GM12878 (cell line): ENCODE measurements at regions of chr11 and their contacts with region 1.

Region 1: DNA sequence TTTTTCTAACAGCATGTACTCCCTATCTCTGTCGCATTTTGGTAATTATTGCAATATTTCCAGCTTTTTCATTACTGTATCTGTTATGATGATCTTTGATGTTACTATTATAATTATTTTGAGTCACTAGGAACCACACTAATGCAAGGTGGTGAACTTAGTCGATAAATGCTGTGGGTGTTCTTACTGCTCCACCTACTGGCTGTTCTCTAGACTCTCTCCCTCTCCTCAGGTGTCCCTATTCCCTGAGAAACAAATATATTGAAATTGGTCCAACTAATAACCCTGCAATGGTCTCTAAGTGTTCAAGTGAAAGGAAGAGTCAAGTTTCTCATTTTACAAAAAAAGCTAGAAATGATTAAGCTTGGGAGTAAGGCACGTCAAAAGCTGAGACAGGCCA is 10.5 kb downstream of the ARL14EP start:
- DNase-seq: no peak
- ATAC-seq: peak; percentile 82
- H3K4me3 ChIP-seq: no peak overlapping the region
- H3K27ac ChIP-seq: no peak overlapping the region
- H3K4me1 ChIP-seq: no peaks in the 10 kb centered on the region
- H3K27me3 ChIP-seq: no peaks in the 10 kb centered on the region
- CTCF ChIP-seq: peak; percentile 48 to 55 (median 49); a peak in 5 of 6 replicates
- EP300 ChIP-seq: no peak
- POLR2A ChIP-seq: no peak
- RAD21 ChIP-seq: peak; percentile 56

Region 2: DNA sequence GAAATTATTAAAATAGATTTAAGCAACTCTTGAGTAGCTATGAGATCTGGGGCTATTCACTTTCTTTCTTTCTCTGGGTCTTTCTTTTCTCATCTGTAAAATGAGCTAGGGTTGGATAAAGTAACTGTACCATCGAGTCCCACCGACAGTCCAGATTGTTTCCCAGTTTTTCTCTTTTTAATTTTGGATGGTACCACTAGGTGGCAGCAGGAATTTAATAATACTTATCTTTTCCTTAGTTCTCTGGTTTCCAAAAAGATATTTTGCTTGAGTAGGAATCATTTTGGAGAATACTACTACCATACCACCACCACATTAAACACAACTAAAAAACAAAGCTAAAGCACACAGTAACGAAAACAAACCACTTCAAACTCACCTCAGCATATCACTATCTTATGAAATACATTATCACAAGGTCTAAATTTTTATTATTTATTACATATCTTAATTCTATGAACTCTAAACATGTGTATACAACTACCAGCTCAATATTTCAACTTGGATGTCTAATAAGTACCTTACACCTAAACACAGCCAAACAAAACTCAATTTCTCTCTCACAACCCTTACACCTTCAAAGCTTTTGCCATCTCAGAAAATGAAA is 900.6 kb before region 1 on chr11:
- CTCF ChIA-PET with region 1: interaction called, 3 read pairs
- POLR2A ChIA-PET with region 1: no interaction called
- RAD21 ChIA-PET with region 1: no interaction called
- SMC1A ChIA-PET with region 1: no interaction called
- in situ Hi-C with region 1: no loop called
- intact Hi-C with region 1: loop called (anchors 5 kb)
- DNase-seq: no peak
- ATAC-seq: peak; percentile 40; the same call in 1 of the 3 replicates
- H3K4me3 ChIP-seq: no peak overlapping the region
- H3K27ac ChIP-seq: no peak overlapping the region
- H3K4me1 ChIP-seq: no peaks in the 10 kb centered on the region
- H3K27me3 ChIP-seq: no peaks in the 10 kb centered on the region
- CTCF ChIP-seq: peak; percentile 33 to 47 (median 37); a peak in 5 of 6 replicates
- EP300 ChIP-seq: no peak
- POLR2A ChIP-seq: no peak
- RAD21 ChIP-seq: peak; percentile 45

Region 3: DNA sequence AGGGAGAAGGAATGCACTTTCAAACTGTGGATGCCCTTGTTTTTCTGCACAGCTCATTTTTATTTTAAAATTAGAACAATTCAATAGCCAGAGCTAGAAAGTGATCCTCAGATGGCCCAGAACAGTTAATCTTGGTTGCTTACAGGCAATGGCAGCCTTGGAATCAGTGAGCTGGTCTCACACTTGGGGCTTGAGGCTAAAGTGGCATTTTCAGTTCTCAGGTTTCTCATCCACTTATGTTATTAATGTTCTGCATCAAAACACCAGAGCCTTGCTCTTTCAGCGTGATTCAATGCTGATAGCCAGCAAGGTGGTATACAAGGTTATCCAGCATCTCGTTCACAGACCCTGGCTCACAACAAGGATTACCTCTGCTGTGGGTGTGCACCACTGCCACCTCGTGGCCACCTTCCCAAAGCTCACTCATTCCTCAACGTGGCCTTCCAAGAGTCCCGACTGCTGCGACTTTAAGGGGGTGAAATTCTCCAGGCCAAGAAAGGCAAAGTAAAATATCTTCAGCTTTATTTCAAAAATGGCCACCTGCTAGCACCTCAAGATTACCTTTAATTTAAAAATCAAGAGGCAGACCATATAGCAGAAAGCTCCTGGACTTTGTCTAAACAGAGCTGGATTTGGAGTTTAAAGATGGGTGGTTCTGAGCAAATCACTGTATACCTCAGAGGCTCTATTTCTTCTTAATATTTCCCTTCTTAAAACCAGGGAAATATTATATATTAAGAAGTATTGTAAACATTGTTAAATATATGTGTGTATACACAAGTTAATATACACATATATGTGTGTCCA is 136.8 kb before region 1 on chr11:
- CTCF ChIA-PET with region 1: interaction called, 15 read pairs
- POLR2A ChIA-PET with region 1: no interaction called
- RAD21 ChIA-PET with region 1: interaction called, 8 read pairs
- SMC1A ChIA-PET with region 1: interaction called, 4 read pairs
- in situ Hi-C with region 1: no loop called
- intact Hi-C with region 1: loop called (anchors 5 kb)
- DNase-seq: no peak
- ATAC-seq: peak; percentile 98
- H3K4me3 ChIP-seq: no peak overlapping the region
- H3K27ac ChIP-seq: no peak overlapping the region
- H3K4me1 ChIP-seq: no peaks in the 10 kb centered on the region
- H3K27me3 ChIP-seq: no peaks in the 10 kb centered on the region; a peak in 1 of 4 replicates
- CTCF ChIP-seq: peak; percentile 76 to 88 (median 85)
- EP300 ChIP-seq: no peak
- POLR2A ChIP-seq: no peak
- RAD21 ChIP-seq: peak; percentile 73

Region 4: DNA sequence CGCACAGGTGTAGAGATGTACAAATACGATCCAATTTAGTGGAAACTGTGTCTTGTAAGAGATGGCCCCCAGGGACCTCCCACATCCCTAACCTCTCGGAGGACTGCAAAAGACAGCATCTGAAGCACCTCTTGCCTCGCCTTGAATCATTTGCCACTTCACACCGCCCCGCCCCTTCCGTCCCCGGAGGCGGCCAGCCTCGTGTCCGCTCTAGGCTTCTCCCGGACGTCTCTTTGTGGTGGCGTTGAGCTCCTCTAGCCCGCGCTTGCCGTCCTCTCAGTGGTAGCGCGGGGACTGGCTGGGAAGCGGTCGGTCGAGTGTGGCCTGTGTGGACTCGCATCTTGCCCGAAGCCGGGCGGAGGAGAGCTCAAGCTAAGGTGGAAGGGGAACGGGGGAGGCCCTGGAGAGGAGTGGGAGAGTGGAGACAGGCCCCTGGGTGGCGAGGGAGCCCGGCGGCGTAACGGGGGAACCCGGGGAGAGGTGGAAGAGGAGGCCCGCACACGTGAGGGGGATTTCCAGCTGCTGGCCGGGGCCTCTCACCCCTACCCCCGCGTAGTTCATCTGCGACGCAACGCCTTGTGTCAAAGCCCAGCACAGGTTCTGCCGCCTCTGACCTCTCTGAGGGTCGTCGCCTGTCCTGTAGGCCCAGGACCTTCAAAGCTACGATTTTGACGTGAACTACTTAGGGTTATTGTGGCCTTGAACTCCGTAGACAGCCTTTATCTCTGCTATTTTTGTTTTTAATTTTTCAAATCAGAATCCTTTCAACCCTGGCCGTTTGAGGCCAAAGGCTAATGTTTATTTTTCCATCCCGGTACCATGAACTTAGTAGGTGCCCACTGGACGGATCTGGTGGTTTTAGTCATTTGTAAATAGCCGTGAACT is 10.3 kb before region 1 on chr11 and contains the start of gene ARL14EP:
- CTCF ChIA-PET with region 1: interaction called, 71 read pairs
- POLR2A ChIA-PET with region 1: interaction called, 42 read pairs
- RAD21 ChIA-PET with region 1: interaction called, 14 read pairs
- SMC1A ChIA-PET with region 1: interaction called, 71 read pairs
- in situ Hi-C with region 1: no loop called
- intact Hi-C with region 1: no loop called
- DNase-seq: peak; percentile 82
- ATAC-seq: peak; percentile 91
- H3K4me3 ChIP-seq: peak within 1 kb of the TSS; percentile 100
- H3K27ac ChIP-seq: peak within 1 kb of the TSS; percentile 92
- H3K4me1 ChIP-seq: peaks cover 2% of the 10 kb centered on the region; the same call in 1 of the 2 replicates
- H3K27me3 ChIP-seq: no peaks in the 10 kb centered on the region
- CTCF ChIP-seq: no peak
- EP300 ChIP-seq: peak in 1 of 2 experiments; percentile 20; a peak in 1 of 4 replicates
- POLR2A ChIP-seq: peak; percentile 99
- RAD21 ChIP-seq: 0 out of 2 replicates have a peak, but pooled peaks have one; percentile 1
- polyA plus RNA-seq, gene ARL14EP: 41.3 to 56.7 TPM